CD8-positive, alpha-beta T cell (primary cell): ENCODE measurements at regions of chr1 and their contacts with region 1.

Region 1: DNA sequence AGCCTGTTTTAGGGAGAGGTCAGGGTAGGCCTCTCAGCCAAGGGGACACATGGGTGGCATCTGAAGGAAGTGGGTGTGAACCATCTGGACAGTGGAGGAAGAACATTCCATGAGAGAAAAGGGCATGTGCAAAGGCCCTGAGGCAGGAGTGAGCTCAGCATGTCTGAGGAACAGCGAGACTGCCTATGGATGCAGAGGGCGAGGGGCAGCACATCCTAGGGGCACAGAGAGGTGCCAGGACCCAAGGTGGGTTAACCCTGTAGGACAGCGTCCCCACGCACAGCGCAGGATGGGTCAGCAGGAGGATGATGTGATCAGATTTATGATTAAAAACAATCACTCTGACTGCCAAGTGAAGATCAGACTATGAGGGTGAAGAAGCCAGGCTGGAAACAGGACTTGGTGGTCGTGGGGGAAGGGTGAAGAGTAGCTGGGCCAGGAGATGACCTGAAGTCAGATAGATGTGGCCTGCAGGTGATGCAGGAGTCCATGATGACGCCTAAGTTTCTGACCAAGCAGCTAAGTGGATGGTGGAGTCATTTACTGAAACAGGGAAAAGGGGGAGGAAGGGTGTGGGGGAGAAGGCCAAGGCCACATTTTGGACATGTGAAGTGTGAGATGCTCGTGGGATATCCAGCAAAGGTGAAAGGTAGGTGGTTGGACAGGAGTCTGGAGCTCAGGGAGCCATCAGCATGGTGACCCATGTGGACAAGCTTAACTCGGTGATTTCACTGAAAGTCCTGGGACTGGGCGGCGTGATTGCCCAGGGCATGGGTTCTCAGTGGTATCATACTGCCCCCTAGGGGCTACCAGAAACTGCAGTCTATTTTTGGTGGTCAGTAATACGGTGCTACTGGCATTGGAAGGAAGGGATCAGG is 37.8 kb downstream of the PABPC4 start:
- DNase-seq: peak in 8 of 9 experiments; percentile 16 to 71 (median 43)
- ATAC-seq: peak; percentile 67
- H3K4me3 ChIP-seq: no peak overlapping the region
- H3K4me3 Mint-ChIP-seq: no peak overlapping the region
- H3K27ac ChIP-seq: no peak overlapping the region
- H3K27ac Mint-ChIP-seq: no peak overlapping the region
- H3K4me1 ChIP-seq: no peaks in the 10 kb centered on the region
- H3K4me1 Mint-ChIP-seq: no peaks in the 10 kb centered on the region
- H3K27me3 ChIP-seq: no peaks in the 10 kb centered on the region
- H3K27me3 Mint-ChIP-seq: no peaks in the 10 kb centered on the region
- CTCF ChIP-seq: peak; percentile 77

Region 2: DNA sequence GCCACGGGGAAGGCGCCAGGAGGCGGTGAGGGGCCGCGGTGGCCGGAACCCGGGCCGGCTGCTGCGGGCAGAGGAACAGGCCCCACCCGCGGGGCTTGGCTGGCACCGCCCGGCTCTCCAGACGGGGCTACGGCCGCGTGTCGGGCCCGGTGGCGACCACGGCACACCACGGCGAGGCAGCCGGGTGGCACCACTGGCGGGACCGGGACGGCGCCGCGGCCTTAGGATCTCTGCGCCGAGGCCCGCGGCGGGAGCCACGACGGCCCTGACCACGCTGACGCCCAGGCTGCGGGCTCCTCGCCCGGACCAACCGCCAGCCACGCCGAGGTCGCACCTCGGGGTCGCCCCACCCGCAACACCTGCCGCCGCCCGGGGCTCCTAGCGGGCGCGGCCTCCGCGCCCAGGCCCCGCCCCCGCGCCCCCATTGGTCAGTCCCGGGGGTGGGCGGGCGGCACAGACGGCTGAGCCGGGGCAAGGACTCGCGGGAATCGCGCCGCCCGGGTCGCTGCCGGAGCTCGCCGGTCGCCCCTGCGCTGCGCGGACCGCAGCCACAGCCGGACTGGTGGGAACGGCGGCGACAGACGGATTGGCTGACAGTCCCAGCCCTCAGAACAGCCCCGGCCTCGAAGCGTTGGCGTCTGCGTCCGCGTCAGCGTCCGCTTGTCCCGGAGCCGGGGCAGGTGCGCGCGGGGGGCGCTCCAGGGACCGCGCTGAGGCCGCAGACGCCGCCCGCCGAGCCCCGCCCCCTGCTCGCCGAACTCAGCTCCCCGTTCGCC is 47.5 kb before region 1 on chr1 and contains the start of gene BMP8A:
- CTCF ChIA-PET with region 1: interaction called, 6 read pairs
- POLR2A ChIA-PET with region 1: no interaction called
- intact Hi-C with region 1: loop called (anchors 1 to 5 kb)
- DNase-seq: peak; percentile 50 to 87 (median 72)
- ATAC-seq: peak; percentile 91
- H3K4me3 ChIP-seq: peak within 1 kb of the TSS; percentile 24 to 54
- H3K4me3 Mint-ChIP-seq: peak within 1 kb of the TSS; percentile 74
- H3K27ac ChIP-seq: no peak within 1 kb of the TSS
- H3K27ac Mint-ChIP-seq: no peak within 1 kb of the TSS
- H3K4me1 ChIP-seq: no peaks in the 10 kb centered on the region
- H3K4me1 Mint-ChIP-seq: peaks cover 3% of the 10 kb centered on the region
- H3K27me3 ChIP-seq: peaks cover 0 to 9% of the 10 kb centered on the region in 2 experiments
- H3K27me3 Mint-ChIP-seq: peaks cover 24% of the 10 kb centered on the region
- CTCF ChIP-seq: no peak
- total RNA-seq, gene BMP8A: 0.27 TPM in 1 of 2 experiments, not detected in the other